Dendritic cell treated with granulocyte-macrophage colony-stimulating factor and Interleukin-4, amounts not matched to agents 40 ng/mL and 50 ng/mL, for 4 days (primary cell): ENCODE measurements at regions of chr19 and their contacts with region 1.

Region 1: DNA sequence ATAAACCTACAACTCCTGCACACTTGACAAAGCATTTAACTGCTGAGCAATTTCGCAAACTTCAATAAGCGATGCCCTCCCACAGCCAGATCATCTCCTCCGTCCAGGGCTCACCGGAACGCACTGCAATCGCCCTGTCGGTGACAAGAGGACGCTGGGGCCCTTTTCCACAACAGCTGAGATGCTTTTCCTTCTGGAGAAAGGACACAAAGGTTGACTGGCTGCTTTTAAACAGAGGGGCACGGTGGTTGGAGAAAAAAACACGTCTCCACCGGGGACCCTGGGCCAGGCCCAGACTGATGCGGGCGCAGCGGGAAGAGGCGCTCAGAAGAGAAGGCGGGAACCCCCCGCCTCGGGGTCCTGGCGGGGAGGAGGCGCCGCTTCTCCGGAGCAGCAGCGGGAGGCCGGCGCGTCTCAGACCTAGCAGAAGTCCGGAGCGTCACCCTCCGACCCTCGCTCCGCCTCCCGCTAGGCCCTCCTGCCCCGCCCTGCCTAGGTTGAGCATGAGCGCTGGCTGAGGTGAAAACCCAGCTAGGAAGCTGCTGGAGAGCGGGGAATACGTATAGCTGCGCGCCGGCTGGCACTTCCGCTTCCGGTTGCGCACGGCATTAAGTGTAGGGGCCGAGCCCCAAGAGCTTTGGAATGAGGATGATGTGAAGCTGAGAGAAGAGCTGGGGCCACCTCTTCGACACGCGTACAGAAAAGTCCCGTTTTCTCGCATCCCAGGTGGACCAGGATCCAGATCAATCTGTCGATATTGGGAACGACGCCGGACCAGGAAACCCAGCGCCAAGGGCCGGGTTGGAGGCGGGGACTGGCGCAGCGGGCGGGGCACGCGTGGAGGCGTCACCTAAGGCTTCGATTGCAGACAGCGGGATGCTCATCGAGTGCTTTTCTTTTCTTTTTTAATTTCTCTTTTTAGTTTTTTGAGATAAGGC is at the start of gene ZNF846:
- H3K4me3 Mint-ChIP-seq: peak within 1 kb of the TSS; percentile 94
- H3K27ac Mint-ChIP-seq: peak within 1 kb of the TSS; percentile 96
- H3K4me1 Mint-ChIP-seq: no peaks in the 10 kb centered on the region
- H3K27me3 Mint-ChIP-seq: no peaks in the 10 kb centered on the region

Region 2: DNA sequence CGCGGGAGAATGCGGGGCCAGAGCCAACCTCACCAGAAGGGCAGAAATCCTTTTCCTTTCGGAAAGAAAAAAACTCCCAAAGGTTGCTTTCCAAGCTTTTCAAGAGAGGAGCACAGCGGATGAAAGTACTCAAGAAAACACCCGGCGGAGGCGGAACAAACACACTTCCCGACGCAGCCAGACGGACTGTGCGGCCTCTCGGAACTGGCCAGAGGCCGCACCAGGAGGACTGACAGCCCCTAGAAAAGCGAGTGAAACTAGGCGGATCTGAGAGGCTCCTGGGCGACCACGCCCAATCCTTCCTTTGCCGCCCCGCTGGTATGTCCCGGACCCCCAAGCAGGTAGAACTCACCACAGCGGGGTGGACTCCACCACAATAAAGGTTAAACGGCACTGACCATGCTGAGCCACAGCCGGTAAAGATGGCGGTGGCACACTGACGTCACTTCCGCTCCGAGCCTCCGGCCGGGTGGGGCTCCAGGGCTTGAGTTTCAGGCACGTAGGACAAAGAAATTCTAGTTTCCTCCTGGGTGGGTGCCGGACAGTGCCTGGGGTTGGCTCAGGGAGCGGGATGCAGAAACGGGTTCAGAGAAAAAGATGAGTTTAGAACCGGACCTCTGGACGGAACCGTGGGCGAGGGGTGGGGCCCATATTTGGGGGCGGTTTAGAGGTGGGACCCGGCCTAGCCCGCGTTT is 93.6 kb before region 1 on chr19 and contains the start of gene ZNF562:
- intact Hi-C with region 1: loop called (anchors 1 kb)
- H3K4me3 Mint-ChIP-seq: peak within 1 kb of the TSS; percentile 98
- H3K27ac Mint-ChIP-seq: peak within 1 kb of the TSS; percentile 99
- H3K4me1 Mint-ChIP-seq: peaks cover 23% of the 10 kb centered on the region
- H3K27me3 Mint-ChIP-seq: no peaks in the 10 kb centered on the region

Region 3: GRCh38 chr19:9711815-9712214 is 56.6 kb before region 1 on chr19:
- intact Hi-C with region 1: loop called (anchors 10 kb)
- H3K4me3 Mint-ChIP-seq: no peak overlapping the region
- H3K27ac Mint-ChIP-seq: no peak overlapping the region
- H3K4me1 Mint-ChIP-seq: peaks cover 11% of the 10 kb centered on the region
- H3K27me3 Mint-ChIP-seq: no peaks in the 10 kb centered on the region

Region 4: DNA sequence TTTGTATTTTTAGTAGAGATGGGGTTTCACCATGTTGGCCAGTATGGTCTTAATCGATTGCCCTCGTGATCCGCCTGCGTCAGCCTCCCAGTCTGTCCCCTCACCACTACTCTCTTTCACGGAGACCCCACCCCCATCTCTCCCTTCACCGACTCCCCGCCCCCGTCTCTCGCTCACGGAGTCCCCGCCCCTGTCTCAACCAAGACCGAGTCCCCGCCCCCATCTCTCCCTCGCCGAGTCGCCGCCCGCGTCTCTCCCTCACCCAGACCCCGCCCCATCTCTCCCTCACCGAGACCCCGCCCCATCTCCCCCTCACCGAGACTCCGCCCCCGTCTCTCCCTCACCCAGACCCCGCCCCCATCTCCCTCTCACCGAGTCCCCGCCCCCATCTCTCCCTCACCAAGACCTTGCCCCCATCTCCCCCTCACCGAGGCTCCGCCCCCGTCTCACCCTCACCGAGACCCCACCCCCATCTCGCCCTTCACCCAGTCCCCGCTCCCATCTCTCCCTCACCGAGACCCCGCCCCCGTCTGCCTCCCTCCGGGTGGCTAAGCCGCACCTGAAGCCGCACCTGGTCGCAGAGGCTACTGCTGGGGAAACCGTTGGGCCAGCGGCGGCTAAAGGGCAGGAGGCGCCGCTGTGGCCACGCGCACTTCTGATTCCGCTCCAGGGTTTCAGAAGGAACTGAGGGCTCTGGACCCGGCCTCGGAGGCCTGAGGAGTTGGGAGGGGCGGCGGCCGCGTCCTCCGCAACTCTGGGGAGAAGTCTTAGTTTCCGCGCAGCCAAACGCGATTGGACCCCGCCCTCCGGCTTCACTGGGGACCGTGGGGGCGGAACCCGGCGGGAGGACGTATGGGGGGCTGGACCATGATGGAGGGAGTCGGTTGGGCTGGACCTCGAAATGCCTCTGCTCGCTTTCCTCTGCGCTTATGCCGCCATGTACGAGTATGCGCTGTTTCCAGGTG is 17.2 kb after region 1 on chr19:
- intact Hi-C with region 1: loop called (anchors 2 kb)
- H3K4me3 Mint-ChIP-seq: peak overlapping the region; percentile 80
- H3K27ac Mint-ChIP-seq: peak overlapping the region; percentile 96
- H3K4me1 Mint-ChIP-seq: peaks cover 40% of the 10 kb centered on the region
- H3K27me3 Mint-ChIP-seq: no peaks in the 10 kb centered on the region